A549 (cell line): ENCODE measurements at regions of chr11 and their contacts with region 1.

Region 1: GRCh38 chr11:114280696-114281095 is 15.5 kb upstream of the NNMT start:
- DNase-seq: peak; percentile 67 to 89
- ATAC-seq: peak; percentile 93 to 96
- H3K4me3 ChIP-seq: no peak overlapping the region
- H3K27ac ChIP-seq: peak overlapping the region; percentile 97 to 100
- H3K4me1 ChIP-seq: peaks cover 51% of the 10 kb centered on the region
- CTCF ChIP-seq: peak; percentile 72
- EP300 ChIP-seq: no peak
- POLR2A ChIP-seq: no peak
- RAD21 ChIP-seq: peak; percentile 93 to 94

Region 2: DNA sequence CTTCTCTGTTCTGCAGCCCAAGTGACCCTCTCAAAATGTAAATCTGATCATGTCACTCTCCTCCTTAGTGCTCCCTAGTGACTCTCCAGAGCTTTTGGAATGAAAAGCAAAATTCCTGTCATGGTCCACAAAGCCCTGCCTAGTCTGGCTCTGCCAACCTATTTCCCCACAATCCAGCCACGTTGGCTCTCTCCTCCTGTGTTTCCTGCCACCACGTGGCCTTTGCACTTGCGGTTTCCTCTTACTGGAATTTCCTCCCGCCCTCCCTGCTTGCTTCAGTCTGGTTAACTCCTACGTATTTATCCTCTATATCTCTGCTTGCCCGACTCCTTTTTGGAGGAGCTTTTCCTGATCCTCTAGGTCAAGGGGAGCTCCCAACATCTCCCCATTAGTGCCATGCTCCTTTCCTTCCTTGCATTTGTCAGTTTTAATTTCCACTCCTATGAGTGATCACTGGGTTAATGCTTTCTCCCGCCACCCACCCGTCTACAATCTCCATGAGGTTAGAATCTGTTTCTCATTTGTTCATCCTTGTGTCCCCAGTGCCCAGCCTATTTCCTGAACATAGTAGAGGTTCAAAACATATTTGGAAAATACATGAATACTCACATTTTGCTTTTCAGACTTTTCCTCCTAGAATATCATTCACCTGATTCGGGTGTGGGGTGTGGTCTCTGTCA is 27.0 kb after region 1 on chr11:
- CTCF ChIA-PET with region 1: interaction called, 13 read pairs
- POLR2A ChIA-PET with region 1: interaction called, 3 read pairs
- DNase-seq: no peak
- ATAC-seq: peak in 1 of 2 experiments; percentile 33; a peak in 3 of 6 replicates
- H3K4me3 ChIP-seq: peak overlapping the region; percentile 21; the same call in 1 of the 3 replicates
- H3K27ac ChIP-seq: peak overlapping the region; percentile 65 to 79; a peak in 5 of 6 replicates
- H3K4me1 ChIP-seq: peaks cover 60% of the 10 kb centered on the region
- CTCF ChIP-seq: no peak
- EP300 ChIP-seq: no peak
- POLR2A ChIP-seq: no peak
- RAD21 ChIP-seq: no peak

Region 3: GRCh38 chr11:114317787-114318137 is 37.1 kb after region 1 on chr11:
- CTCF ChIA-PET with region 1: interaction called, 12 read pairs
- POLR2A ChIA-PET with region 1: no interaction called
- DNase-seq: peak in 1 of 2 experiments; percentile 70
- ATAC-seq: peak in 1 of 2 experiments; percentile 27; a peak in 3 of 6 replicates
- H3K4me3 ChIP-seq: no peak overlapping the region
- H3K27ac ChIP-seq: peak overlapping the region; percentile 87 to 92
- H3K4me1 ChIP-seq: peaks cover 95% of the 10 kb centered on the region
- CTCF ChIP-seq: peak; percentile 47
- EP300 ChIP-seq: no peak
- POLR2A ChIP-seq: no peak
- RAD21 ChIP-seq: peak; percentile 57 to 61